Naive thymus-derived CD8-positive, alpha-beta T cell (primary cell): ENCODE measurements at regions of chr2 and their contacts with region 1.

Region 1: GRCh38 chr2:96407041-96407918 is 71.7 kb downstream of the NCAPH start:
- DNase-seq: peak; percentile 53 to 94 (median 85)
- ATAC-seq: peak; percentile 94 to 96
- H3K4me3 Mint-ChIP-seq: peak overlapping the region; percentile 64 to 95 (median 88)
- H3K27ac Mint-ChIP-seq: peak overlapping the region; percentile 92 to 99 (median 98)
- H3K4me1 Mint-ChIP-seq: peaks cover 20 to 65% (median 49%) of the 10 kb centered on the region in 4 donors
- H3K27me3 Mint-ChIP-seq: no peaks in the 10 kb centered on the region

Region 2: GRCh38 chr2:96477458-96477857 is 70.2 kb after region 1 on chr2:
- POLR2A ChIA-PET with region 1: no interaction called
- DNase-seq: no peak
- ATAC-seq: no peak
- H3K4me3 Mint-ChIP-seq: no peak overlapping the region
- H3K27ac Mint-ChIP-seq: no peak overlapping the region
- H3K4me1 Mint-ChIP-seq: peaks cover 0 to 6% (median 1%) of the 10 kb centered on the region in 4 donors
- H3K27me3 Mint-ChIP-seq: peaks cover 0 to 4% (median 0%) of the 10 kb centered on the region in 5 donors

Region 3: GRCh38 chr2:96509114-96509846 is 102.0 kb after region 1 on chr2:
- POLR2A ChIA-PET with region 1: interaction called, 38 read pairs
- DNase-seq: peak in 7 of 10 donors; percentile 29 to 51 (median 41)
- ATAC-seq: peak in 1 of 2 donors; percentile 26
- H3K4me3 Mint-ChIP-seq: peak overlapping the region in 6 of 10 donors; percentile 22 to 61 (median 40)
- H3K27ac Mint-ChIP-seq: peak overlapping the region in 2 of 10 donors; percentile 52 to 88
- H3K4me1 Mint-ChIP-seq: peaks cover 6 to 20% (median 13%) of the 10 kb centered on the region in 4 donors
- H3K27me3 Mint-ChIP-seq: peaks cover 4 to 22% (median 9%) of the 10 kb centered on the region in 5 donors